ENCODE measurements at regions of chr9 and their contacts with region 1.

Region 1: DNA sequence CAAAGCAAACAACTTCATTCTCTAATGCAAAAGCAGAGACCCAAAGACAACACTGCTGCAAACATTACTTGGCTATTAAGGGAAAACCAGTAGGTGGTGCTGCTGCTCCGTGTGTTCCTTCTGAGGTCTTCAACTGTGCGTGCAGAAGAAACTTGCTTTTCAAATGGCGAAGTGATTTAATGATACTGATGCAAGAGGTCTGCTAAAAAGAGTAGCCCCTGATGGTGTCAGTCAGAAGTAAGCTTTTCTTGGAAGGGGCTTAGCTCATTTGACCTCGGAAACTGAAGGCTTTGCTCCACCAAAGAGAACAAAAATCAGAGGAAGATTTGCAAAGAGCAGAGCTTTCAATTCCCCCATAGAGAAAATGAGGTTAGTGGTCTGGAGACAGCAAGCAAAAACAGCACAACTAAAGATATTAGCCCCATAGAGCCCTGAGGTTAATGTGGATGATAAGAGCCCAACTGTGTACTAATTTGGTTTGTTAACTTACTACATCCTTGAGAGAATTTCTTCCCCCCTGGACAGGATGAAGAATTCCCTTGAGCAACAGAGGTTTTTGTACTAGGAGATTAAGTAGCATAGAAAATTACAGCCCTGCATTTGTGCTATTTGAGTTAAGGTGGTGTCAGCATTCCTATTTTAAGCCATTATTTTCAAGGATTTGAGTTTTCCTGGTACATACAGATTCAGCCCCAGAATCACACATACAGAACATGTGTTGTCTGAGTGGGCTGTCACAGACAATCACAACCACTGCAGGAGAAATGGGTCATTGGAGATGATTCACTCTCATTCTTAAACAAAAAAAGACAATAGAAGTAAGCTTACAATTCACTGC is 153.2 kb upstream of the C9orf72 start:
- DNase-seq: peak; percentile 58
- H3K4me3 ChIP-seq: no peak overlapping the region
- H3K27ac ChIP-seq: no peak overlapping the region
- H3K4me1 ChIP-seq: no peaks in the 10 kb centered on the region
- H3K27me3 ChIP-seq: no peaks in the 10 kb centered on the region
- CTCF ChIP-seq: peak; percentile 37 to 68
- POLR2A ChIP-seq: no peak

Region 2: GRCh38 chr9:27645161-27645840 is 81.2 kb before region 1 on chr9:
- CTCF ChIA-PET with region 1: no interaction called
- POLR2A ChIA-PET with region 1: no interaction called
- dilution Hi-C with region 1: no loop called
- intact Hi-C with region 1: no loop called
- DNase-seq: no peak
- H3K4me3 ChIP-seq: no peak overlapping the region
- H3K27ac ChIP-seq: no peak overlapping the region
- H3K4me1 ChIP-seq: no peaks in the 10 kb centered on the region
- H3K27me3 ChIP-seq: no peaks in the 10 kb centered on the region
- CTCF ChIP-seq: no peak
- POLR2A ChIP-seq: no peak

Region 3: DNA sequence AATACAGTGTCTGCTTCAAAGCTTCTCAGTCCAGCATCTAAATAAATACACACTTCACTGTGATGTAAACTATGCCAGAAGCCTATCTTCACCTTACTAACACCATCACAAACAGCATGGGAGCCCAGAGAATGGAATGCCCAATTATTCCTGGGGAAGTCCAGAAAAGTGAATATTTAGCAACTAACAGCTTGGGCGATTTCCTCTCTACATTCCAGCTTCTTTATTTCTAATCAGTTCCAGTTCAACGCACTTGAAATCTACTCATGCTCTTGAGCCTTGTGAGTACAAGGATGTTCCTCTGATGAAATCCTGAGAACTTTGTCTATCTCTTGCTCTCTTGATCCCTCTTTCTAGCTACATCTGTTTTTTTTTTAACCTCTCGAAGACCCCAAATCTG is 52.8 kb before region 1 on chr9:
- CTCF ChIA-PET with region 1: no interaction called
- POLR2A ChIA-PET with region 1: no interaction called
- dilution Hi-C with region 1: no loop called
- intact Hi-C with region 1: no loop called
- DNase-seq: no peak
- H3K4me3 ChIP-seq: no peak overlapping the region
- H3K27ac ChIP-seq: no peak overlapping the region
- H3K4me1 ChIP-seq: no peaks in the 10 kb centered on the region
- H3K27me3 ChIP-seq: no peaks in the 10 kb centered on the region
- CTCF ChIP-seq: no peak
- POLR2A ChIP-seq: no peak

Region 4: GRCh38 chr9:27714388-27714787 is 12.1 kb before region 1 on chr9:
- CTCF ChIA-PET with region 1: no interaction called
- POLR2A ChIA-PET with region 1: no interaction called
- dilution Hi-C with region 1: no loop called
- intact Hi-C with region 1: no loop called
- DNase-seq: no peak
- H3K4me3 ChIP-seq: no peak overlapping the region
- H3K27ac ChIP-seq: no peak overlapping the region
- H3K4me1 ChIP-seq: no peaks in the 10 kb centered on the region
- H3K27me3 ChIP-seq: no peaks in the 10 kb centered on the region
- CTCF ChIP-seq: no peak
- POLR2A ChIP-seq: no peak

Region 5: DNA sequence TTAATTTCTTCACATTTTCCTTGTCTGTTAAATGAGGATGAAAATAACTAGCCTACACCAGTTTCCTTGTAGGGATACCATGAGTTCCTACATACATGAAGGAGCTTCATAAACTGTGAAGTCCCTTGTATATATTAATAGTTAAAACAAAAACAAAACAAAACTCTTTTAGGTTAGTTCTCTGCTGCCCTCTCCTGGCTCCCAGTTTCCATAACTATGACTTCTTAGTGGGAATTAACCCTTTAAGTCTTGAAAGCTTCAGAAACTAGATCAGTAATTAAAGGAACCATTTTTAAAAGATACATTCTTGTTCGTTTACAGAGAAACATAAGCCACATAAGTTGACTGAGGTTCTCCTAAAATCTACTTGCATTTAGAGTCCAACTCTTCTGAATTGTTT is 346.8 kb after region 1 on chr9:
- CTCF ChIA-PET with region 1: no interaction called
- POLR2A ChIA-PET with region 1: no interaction called
- dilution Hi-C with region 1: no loop called
- intact Hi-C with region 1: loop called (anchors 1 kb)
- DNase-seq: peak; percentile 60
- H3K4me3 ChIP-seq: no peak overlapping the region
- H3K27ac ChIP-seq: no peak overlapping the region
- H3K4me1 ChIP-seq: no peaks in the 10 kb centered on the region
- H3K27me3 ChIP-seq: no peaks in the 10 kb centered on the region
- CTCF ChIP-seq: peak; percentile 6 to 24
- POLR2A ChIP-seq: no peak

Region 6: GRCh38 chr9:28774416-28775235 is 1048.2 kb after region 1 on chr9:
- CTCF ChIA-PET with region 1: no interaction called
- POLR2A ChIA-PET with region 1: no interaction called
- dilution Hi-C with region 1: no loop called
- intact Hi-C with region 1: loop called (anchors 10 kb)
- DNase-seq: peak; percentile 8
- H3K4me3 ChIP-seq: no peak overlapping the region
- H3K27ac ChIP-seq: no peak overlapping the region
- H3K4me1 ChIP-seq: no peaks in the 10 kb centered on the region
- H3K27me3 ChIP-seq: no peaks in the 10 kb centered on the region
- CTCF ChIP-seq: peak; percentile 15 to 18
- POLR2A ChIP-seq: no peak

Region 7: DNA sequence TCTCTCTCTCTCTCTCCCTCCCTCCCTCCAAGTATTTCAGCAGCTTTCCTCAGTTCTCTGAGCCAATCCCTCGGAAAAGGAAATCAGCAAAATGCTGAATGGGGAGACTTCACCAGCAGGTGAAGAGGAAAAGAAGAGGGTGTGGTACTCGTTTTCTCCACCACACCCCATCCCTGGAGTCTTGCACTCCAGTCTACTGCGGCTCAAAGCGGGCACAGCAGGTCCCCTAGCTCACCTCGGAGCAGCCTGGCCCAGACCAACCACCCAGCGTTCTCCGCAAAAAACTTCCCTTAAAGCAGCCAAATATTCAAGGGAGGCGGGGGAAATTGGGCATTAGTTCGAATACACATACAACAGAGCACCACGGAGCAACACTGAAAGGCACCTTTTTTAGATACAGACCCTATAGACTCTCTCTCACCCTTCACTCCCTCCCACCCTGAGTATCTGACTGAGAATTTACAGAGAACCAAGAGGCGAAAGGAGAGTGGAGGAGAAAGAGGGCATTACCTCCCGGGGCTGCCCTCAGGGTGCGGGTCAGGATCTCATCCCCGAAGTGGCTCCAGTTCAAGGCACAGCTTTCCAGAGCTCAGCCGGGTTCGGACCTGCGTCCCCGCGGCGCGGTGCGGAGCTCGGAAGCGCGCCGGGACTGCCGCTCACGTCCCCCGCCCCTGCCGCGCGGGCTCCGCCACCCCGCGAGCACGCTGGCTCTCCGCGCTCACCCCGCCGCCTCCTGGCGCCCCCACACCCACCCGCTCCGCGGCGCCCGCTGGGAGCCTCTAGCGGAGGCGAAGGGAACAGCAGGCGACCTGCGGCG is 1485.3 kb after region 1 on chr9:
- CTCF ChIA-PET with region 1: no interaction called
- POLR2A ChIA-PET with region 1: no interaction called
- dilution Hi-C with region 1: no loop called
- intact Hi-C with region 1: loop called (anchors 10 kb)
- DNase-seq: peak; percentile 1
- H3K4me3 ChIP-seq: no peak overlapping the region
- H3K27ac ChIP-seq: no peak overlapping the region
- H3K4me1 ChIP-seq: no peaks in the 10 kb centered on the region
- H3K27me3 ChIP-seq: peaks cover 28 to 34% of the 10 kb centered on the region in 2 experiments
- CTCF ChIP-seq: peak; percentile 37 to 73
- POLR2A ChIP-seq: no peak

Measured in endothelial cell of umbilical vein (primary cell).